ENCODE measurements at regions of chr3 and their contacts with region 1.

Region 1: GRCh38 chr3:150495563-150496168 is 50.6 kb downstream of the SERP1 start:
- DNase-seq: peak in 2 of 4 donors; percentile 53 to 68
- ATAC-seq: peak; percentile 79
- H3K4me3 ChIP-seq: no peak overlapping the region
- H3K27ac ChIP-seq: no peak overlapping the region
- H3K4me1 ChIP-seq: peaks cover 0 to 4% of the 10 kb centered on the region in 2 donors
- H3K27me3 ChIP-seq: no peaks in the 10 kb centered on the region
- CTCF ChIP-seq: peak; percentile 67 to 79

Region 2: GRCh38 chr3:150227839-150228238 is 267.8 kb before region 1 on chr3:
- intact Hi-C with region 1: loop called in 1 of 2 experiments (anchors 10 kb)
- DNase-seq: peak in 1 of 4 donors; percentile 72
- ATAC-seq: peak; percentile 67
- H3K4me3 ChIP-seq: no peak overlapping the region
- H3K27ac ChIP-seq: no peak overlapping the region
- H3K4me1 ChIP-seq: no peaks in the 10 kb centered on the region
- H3K27me3 ChIP-seq: no peaks in the 10 kb centered on the region
- CTCF ChIP-seq: peak; percentile 42 to 48

Region 3: GRCh38 chr3:150248116-150248887 is 247.4 kb before region 1 on chr3:
- intact Hi-C with region 1: no loop called
- DNase-seq: peak in 1 of 4 donors; percentile 41
- ATAC-seq: peak; percentile 44
- H3K4me3 ChIP-seq: no peak overlapping the region
- H3K27ac ChIP-seq: no peak overlapping the region
- H3K4me1 ChIP-seq: peaks cover 0 to 7% of the 10 kb centered on the region in 2 donors
- H3K27me3 ChIP-seq: no peaks in the 10 kb centered on the region
- CTCF ChIP-seq: no peak

Region 4: GRCh38 chr3:150359381-150359780 is 136.3 kb before region 1 on chr3:
- intact Hi-C with region 1: no loop called
- DNase-seq: no peak
- ATAC-seq: peak; percentile 85
- H3K4me3 ChIP-seq: no peak overlapping the region
- H3K27ac ChIP-seq: no peak overlapping the region
- H3K4me1 ChIP-seq: no peaks in the 10 kb centered on the region
- H3K27me3 ChIP-seq: no peaks in the 10 kb centered on the region
- CTCF ChIP-seq: no peak

Region 5: GRCh38 chr3:150449169-150449721 is 46.4 kb before region 1 on chr3:
- intact Hi-C with region 1: no loop called
- DNase-seq: no peak
- ATAC-seq: no peak
- H3K4me3 ChIP-seq: no peak overlapping the region
- H3K27ac ChIP-seq: peak overlapping the region in 1 of 2 donors; percentile 1
- H3K4me1 ChIP-seq: peaks cover 28 to 42% of the 10 kb centered on the region in 2 donors
- H3K27me3 ChIP-seq: no peaks in the 10 kb centered on the region
- CTCF ChIP-seq: no peak